Aorta (tissue), 5 donors: ENCODE measurements at regions of chr2 and their contacts with region 1.

Region 1: GRCh38 chr2:202911512-202912341 is at the starts of genes CARF and WDR12:
- DNase-seq: peak; percentile 96 to 98
- ATAC-seq: peak; percentile 99
- H3K4me3 ChIP-seq: peak within 1 kb of the TSS; percentile 79 to 99
- H3K27ac ChIP-seq: peak within 1 kb of the TSS in 1 of 2 donors; percentile 79
- H3K4me1 ChIP-seq: peaks cover 0 to 4% of the 10 kb centered on the region in 2 donors
- H3K27me3 ChIP-seq: no peaks in the 10 kb centered on the region
- total RNA-seq, gene CARF: 8.8 to 14.4 TPM
- total RNA-seq, gene WDR12: 19.7 to 25.2 TPM

Region 2: GRCh38 chr2:202815548-202816360 is 96.0 kb before region 1 on chr2:
- intact Hi-C with region 1: no loop called
- DNase-seq: no peak
- ATAC-seq: peak; percentile 79
- H3K4me3 ChIP-seq: peak overlapping the region in 1 of 2 donors; percentile 59
- H3K27ac ChIP-seq: peak overlapping the region in 1 of 2 donors; percentile 82
- H3K4me1 ChIP-seq: peaks cover 0 to 3% of the 10 kb centered on the region in 2 donors
- H3K27me3 ChIP-seq: no peaks in the 10 kb centered on the region

Region 3: DNA sequence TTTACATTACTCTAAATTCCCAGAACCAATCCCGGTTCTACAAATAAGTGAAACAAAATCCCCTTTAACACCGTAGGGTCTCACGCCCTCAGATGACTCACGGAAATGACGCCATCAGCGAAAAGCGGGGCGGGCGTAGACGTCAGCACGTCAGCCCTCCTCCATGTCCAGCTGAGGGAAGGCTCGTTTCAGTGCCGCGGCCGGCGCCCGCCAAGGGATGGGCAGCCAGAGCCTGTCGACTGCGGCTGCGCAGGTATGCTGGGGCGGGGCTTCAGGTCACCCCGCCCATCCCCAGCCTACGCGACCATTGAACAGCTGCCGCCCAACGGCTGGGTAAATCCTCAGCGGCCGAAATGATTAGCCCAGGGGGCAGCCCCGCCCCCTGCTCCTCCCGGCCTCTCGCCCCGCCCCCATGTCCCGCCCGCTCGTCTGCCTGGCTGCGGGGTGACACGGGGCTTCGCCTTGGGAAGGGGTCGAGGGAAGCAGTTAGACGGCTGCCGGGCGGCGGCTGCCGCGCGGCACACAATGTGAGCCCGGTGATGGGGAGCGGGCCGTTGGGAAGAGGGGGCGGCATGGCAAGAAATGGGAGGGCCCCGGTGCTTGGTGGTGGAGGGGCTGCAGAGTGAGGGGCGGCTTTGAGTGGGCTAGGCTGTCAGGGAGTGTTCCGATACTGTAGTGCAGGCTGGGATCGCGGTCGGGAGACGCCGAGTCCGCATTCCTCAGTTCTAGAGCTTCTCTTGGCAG is 102.9 kb after region 1 on chr2 and contains the start of gene NBEAL1:
- intact Hi-C with region 1: loop called in 1 of 2 experiments (anchors 10 kb)
- DNase-seq: peak; percentile 99
- ATAC-seq: peak; percentile 99
- H3K4me3 ChIP-seq: peak within 1 kb of the TSS; percentile 77 to 96
- H3K27ac ChIP-seq: peak within 1 kb of the TSS; percentile 94 to 98
- H3K4me1 ChIP-seq: no peaks in the 10 kb centered on the region
- H3K27me3 ChIP-seq: no peaks in the 10 kb centered on the region
- total RNA-seq, gene NBEAL1: 68.3 to 178 TPM

Region 4: DNA sequence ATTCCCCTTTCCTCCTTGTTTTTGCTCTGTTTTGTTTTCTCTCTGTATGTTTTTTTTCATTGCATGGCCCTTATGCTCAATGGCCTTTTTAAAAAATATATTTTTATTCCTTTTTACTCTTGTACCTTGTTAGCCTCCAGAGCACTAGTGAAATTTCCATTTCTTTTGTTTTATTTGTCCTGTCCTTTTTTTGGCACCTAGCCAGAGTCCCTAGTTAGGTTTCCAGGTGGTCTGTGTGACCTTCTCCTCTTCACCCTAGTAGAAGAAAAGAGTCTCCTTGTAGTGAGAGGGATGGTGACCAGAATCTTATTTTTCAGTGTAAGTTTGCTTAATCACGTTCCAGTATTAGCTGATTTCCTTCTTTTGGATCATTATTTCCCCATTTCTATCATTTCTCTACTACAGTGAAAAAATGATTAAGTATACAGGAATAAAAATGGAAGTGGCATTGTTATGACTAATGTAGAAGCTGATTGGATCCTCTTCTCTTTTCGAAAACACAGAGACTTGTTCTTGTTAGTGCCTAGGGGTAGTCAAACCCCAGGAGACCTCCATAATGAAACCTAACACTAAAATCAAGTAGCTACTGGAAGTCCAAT is 168.8 kb after region 1 on chr2:
- intact Hi-C with region 1: loop called in 1 of 2 experiments (anchors 10 kb)
- DNase-seq: no peak
- ATAC-seq: no peak
- H3K4me3 ChIP-seq: no peak overlapping the region
- H3K27ac ChIP-seq: no peak overlapping the region
- H3K4me1 ChIP-seq: peaks cover 2% of the 10 kb centered on the region in 2 donors
- H3K27me3 ChIP-seq: no peaks in the 10 kb centered on the region

Region 5: GRCh38 chr2:203238704-203239526 is 327.2 kb after region 1 on chr2 and contains the start of gene CYP20A1:
- intact Hi-C with region 1: loop called in 1 of 2 experiments (anchors 5 kb)
- DNase-seq: peak; percentile 98 to 99
- ATAC-seq: peak; percentile 99
- H3K4me3 ChIP-seq: peak within 1 kb of the TSS; percentile 79 to 92
- H3K27ac ChIP-seq: peak within 1 kb of the TSS; percentile 63 to 93
- H3K4me1 ChIP-seq: peaks cover 0 to 2% of the 10 kb centered on the region in 2 donors
- H3K27me3 ChIP-seq: no peaks in the 10 kb centered on the region
- total RNA-seq, gene CYP20A1: 24.8 to 28.8 TPM